ENCODE measurements at regions of chr10 and their contacts with region 1.

Region 1: DNA sequence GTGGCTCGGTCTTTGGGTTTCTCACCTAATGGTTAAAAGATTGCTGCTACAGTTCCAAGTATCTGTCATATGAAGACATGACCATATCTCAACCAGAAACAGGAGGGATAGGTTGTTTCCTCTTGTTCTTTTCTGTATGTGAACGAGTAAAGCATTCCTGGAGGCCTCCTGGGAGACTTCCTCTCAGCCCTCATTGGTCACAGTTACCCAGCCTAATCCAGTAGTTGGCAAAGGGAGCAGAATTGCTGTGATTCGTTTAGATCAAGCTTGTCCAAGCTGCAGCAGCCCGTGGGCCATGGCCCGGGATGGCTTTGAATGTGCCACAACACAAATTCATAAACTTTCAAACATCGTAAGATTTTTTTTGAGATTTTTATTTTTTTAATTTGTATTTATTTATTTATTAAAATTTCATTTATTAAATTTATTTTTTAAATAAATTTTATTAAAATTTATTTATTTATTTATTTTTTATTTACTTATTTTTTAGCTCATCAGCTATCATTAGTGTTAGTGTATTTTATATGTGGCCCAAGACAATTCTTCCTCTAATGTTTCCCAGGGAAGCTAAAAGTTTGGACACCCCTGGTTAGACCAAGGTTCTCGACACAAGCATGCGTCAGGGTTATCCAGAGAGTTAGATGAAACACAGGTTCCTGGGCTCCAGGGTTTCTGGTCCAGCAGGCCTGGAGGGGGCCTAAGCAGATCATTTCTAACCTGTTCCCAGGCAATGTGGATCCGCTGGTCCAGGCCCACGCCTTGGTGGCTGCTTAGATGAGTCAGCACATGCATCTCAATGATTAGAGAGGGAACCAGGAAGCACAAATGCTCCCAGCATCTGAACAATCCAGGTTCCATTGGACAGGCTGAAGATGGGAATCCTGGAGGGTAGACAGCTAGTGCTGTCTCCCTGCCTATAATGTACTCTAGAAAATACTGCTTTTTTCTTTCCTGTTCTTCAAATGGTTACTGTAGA is 25.6 kb downstream of the CDC123 start:
- DNase-seq: peak; percentile 41
- ATAC-seq: peak; percentile 65
- H3K4me3 ChIP-seq: no peak overlapping the region
- H3K27ac ChIP-seq: peak overlapping the region; percentile 50; the same call in 1 of the 2 replicates
- H3K4me1 ChIP-seq: peaks cover 5% of the 10 kb centered on the region; the same call in 1 of the 2 replicates
- H3K27me3 ChIP-seq: no peaks in the 10 kb centered on the region
- CTCF ChIP-seq: no peak
- POLR2A ChIP-seq: no peak
- RAD21 ChIP-seq: no peak

Region 2: DNA sequence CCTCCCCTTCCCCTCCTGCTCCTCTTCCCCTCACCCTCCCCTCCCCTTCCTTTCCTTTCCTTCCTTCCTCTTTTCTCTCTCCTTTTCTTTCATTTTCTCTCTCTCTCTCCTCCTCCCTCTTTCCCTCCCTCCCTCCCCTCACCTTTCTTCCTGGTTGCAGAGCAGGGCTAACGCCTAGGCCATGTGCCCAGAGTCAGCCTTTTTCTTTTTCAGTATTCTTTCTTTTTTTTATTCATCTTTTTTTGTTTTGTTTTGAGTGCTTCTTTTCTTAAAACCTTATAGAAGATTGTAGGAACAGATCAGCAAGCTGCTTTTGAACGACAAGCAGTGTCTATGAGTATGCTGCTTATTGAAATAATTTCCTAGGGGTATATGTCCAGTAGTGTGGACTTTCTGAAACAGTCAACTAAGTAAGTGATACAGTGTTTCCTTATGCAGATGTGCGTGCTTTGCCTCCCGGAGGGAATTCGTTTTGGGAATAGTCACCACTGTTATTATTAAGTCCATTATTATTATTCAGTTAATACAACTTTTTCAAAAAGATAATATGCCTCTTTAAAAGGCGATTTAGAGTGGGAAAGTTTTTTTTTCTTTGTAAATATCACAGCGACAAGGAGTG is 346.9 kb after region 1 on chr10:
- CTCF ChIA-PET with region 1: interaction called, 10 read pairs
- POLR2A ChIA-PET with region 1: no interaction called
- dilution Hi-C with region 1: no loop called
- in situ Hi-C with region 1: no loop called
- intact Hi-C with region 1: no loop called
- DNase-seq: no peak
- ATAC-seq: no peak
- H3K4me3 ChIP-seq: no peak overlapping the region
- H3K27ac ChIP-seq: no peak overlapping the region
- H3K4me1 ChIP-seq: no peaks in the 10 kb centered on the region
- H3K27me3 ChIP-seq: peaks cover 5% of the 10 kb centered on the region
- CTCF ChIP-seq: no peak
- POLR2A ChIP-seq: no peak
- RAD21 ChIP-seq: no peak